ENCODE measurements at regions of chr19 and their contacts with region 1.

Region 1: GRCh38 chr19:7943444-7944176 is at the start of gene TIMM44:
- DNase-seq: peak; percentile 91 to 99 (median 98)
- ATAC-seq: peak; percentile 98
- H3K4me3 ChIP-seq: peak within 1 kb of the TSS; percentile 92
- H3K4me3 Mint-ChIP-seq: peak within 1 kb of the TSS; percentile 83 to 99 (median 94)
- H3K27ac ChIP-seq: peak within 1 kb of the TSS; percentile 96
- H3K27ac Mint-ChIP-seq: peak within 1 kb of the TSS; percentile 78 to 98 (median 96)
- H3K4me1 ChIP-seq: peaks cover 7 to 9% of the 10 kb centered on the region in 2 donors
- H3K4me1 Mint-ChIP-seq: peaks cover 10 to 44% (median 28%) of the 10 kb centered on the region in 7 donors
- H3K27me3 ChIP-seq: no peaks in the 10 kb centered on the region
- H3K27me3 Mint-ChIP-seq: no peaks in the 10 kb centered on the region
- total RNA-seq, gene TIMM44: 65.3 to 97.6 (median 73.8) TPM

Region 2: GRCh38 chr19:7829561-7830271 is 113.9 kb before region 1 on chr19 and contains the start of gene EVI5L:
- CTCF ChIA-PET with region 1: no interaction called
- POLR2A ChIA-PET with region 1: interaction called, 5 read pairs
- intact Hi-C with region 1: loop called in 1 of 2 experiments (anchors 1 kb)
- DNase-seq: peak; percentile 99 to 100 (median 99)
- ATAC-seq: peak; percentile 88
- H3K4me3 ChIP-seq: peak within 1 kb of the TSS; percentile 47
- H3K4me3 Mint-ChIP-seq: peak within 1 kb of the TSS; percentile 77 to 88 (median 84)
- H3K27ac ChIP-seq: peak within 1 kb of the TSS; percentile 50
- H3K27ac Mint-ChIP-seq: peak within 1 kb of the TSS; percentile 4 to 94 (median 84)
- H3K4me1 ChIP-seq: peaks cover 5 to 9% of the 10 kb centered on the region in 2 donors
- H3K4me1 Mint-ChIP-seq: peaks cover 5 to 25% (median 23%) of the 10 kb centered on the region in 7 donors
- H3K27me3 ChIP-seq: no peaks in the 10 kb centered on the region
- H3K27me3 Mint-ChIP-seq: peaks cover 0 to 11% (median 0%) of the 10 kb centered on the region in 5 donors
- total RNA-seq, gene EVI5L: 7.4 to 12.2 (median 11.4) TPM

Region 3: GRCh38 chr19:7903244-7904073 is 40.2 kb before region 1 on chr19 and contains the start of gene MAP2K7:
- CTCF ChIA-PET with region 1: no interaction called
- POLR2A ChIA-PET with region 1: interaction called, 5 read pairs
- intact Hi-C with region 1: loop called (anchors 1 kb)
- DNase-seq: peak; percentile 99 to 100 (median 100)
- ATAC-seq: peak; percentile 91
- H3K4me3 ChIP-seq: peak within 1 kb of the TSS; percentile 91
- H3K4me3 Mint-ChIP-seq: peak within 1 kb of the TSS; percentile 87 to 95 (median 92)
- H3K27ac ChIP-seq: peak within 1 kb of the TSS; percentile 77
- H3K27ac Mint-ChIP-seq: peak within 1 kb of the TSS; percentile 91 to 98 (median 96)
- H3K4me1 ChIP-seq: peaks cover 20 to 24% of the 10 kb centered on the region in 2 donors
- H3K4me1 Mint-ChIP-seq: peaks cover 12 to 37% (median 30%) of the 10 kb centered on the region in 7 donors
- H3K27me3 ChIP-seq: no peaks in the 10 kb centered on the region
- H3K27me3 Mint-ChIP-seq: peaks cover 0 to 3% (median 0%) of the 10 kb centered on the region in 5 donors
- total RNA-seq, gene MAP2K7: 48.7 to 109 (median 66.5) TPM

Region 4: GRCh38 chr19:8005534-8006256 is 62.1 kb after region 1 on chr19 and contains the start of gene ELAVL1:
- CTCF ChIA-PET with region 1: interaction called, 22 read pairs
- POLR2A ChIA-PET with region 1: interaction called, 8 read pairs
- intact Hi-C with region 1: loop called (anchors 1 kb)
- DNase-seq: peak; percentile 80 to 96 (median 88)
- ATAC-seq: peak; percentile 96
- H3K4me3 ChIP-seq: peak within 1 kb of the TSS; percentile 86
- H3K4me3 Mint-ChIP-seq: peak within 1 kb of the TSS; percentile 88 to 97 (median 92)
- H3K27ac ChIP-seq: peak within 1 kb of the TSS; percentile 93
- H3K27ac Mint-ChIP-seq: peak within 1 kb of the TSS; percentile 78 to 94 (median 90)
- H3K4me1 ChIP-seq: peaks cover 20 to 25% of the 10 kb centered on the region in 2 donors
- H3K4me1 Mint-ChIP-seq: peaks cover 30 to 43% (median 37%) of the 10 kb centered on the region in 7 donors
- H3K27me3 ChIP-seq: no peaks in the 10 kb centered on the region
- H3K27me3 Mint-ChIP-seq: no peaks in the 10 kb centered on the region
- total RNA-seq, gene ELAVL1: 32.4 to 117 (median 49.6) TPM

Region 5: GRCh38 chr19:8252922-8253589 is 309.4 kb after region 1 on chr19:
- CTCF ChIA-PET with region 1: interaction called, 10 read pairs
- POLR2A ChIA-PET with region 1: no interaction called
- intact Hi-C with region 1: loop called (anchors 1 kb)
- DNase-seq: peak; percentile 67 to 87 (median 80)
- ATAC-seq: peak; percentile 95
- H3K4me3 ChIP-seq: no peak overlapping the region
- H3K4me3 Mint-ChIP-seq: no peak overlapping the region
- H3K27ac ChIP-seq: no peak overlapping the region
- H3K27ac Mint-ChIP-seq: peak overlapping the region in 2 of 9 donors; percentile 73 to 84
- H3K4me1 ChIP-seq: no peaks in the 10 kb centered on the region
- H3K4me1 Mint-ChIP-seq: peaks cover 0 to 11% (median 6%) of the 10 kb centered on the region in 7 donors
- H3K27me3 ChIP-seq: no peaks in the 10 kb centered on the region
- H3K27me3 Mint-ChIP-seq: no peaks in the 10 kb centered on the region

Region 6: DNA sequence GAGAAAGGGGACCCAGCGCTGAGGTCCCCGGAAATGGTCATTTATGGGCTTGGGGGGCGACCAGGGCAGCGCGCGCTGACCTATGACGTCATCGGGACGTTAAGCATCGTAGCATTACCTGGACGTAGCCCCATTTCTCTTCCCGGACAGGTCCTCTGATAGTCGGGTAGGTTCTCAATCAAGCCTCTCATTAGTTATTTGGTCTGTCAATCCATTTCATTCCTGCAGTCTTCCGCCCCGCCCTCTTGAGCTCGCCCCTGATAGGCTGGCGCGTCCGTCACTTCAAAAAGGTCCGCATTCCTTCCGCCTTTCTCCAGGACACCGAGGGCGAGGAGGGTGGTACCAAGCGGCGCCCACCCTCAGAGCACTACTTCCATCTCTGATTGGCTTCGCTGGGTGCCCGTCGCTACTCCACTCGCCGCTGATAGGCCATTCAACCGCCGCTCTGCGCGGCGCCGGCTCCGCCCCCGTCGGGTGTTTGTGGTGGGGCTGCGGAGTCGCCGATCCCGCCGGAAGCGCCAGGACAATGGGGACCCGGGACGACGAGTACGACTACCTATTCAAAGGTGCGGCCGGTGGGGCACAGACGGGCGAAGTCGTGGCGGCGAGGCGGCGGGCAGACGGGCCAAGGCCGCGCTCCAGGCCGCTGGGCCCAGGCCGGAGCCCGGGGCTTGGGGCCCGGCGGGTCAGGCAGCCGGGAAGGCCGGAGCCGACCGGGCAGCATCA is 446.4 kb after region 1 on chr19 and contains the start of gene RAB11B:
- CTCF ChIA-PET with region 1: no interaction called
- POLR2A ChIA-PET with region 1: no interaction called
- intact Hi-C with region 1: loop called in 1 of 2 experiments (anchors 1 kb)
- DNase-seq: peak; percentile 81 to 99 (median 98)
- ATAC-seq: peak; percentile 93
- H3K4me3 ChIP-seq: peak within 1 kb of the TSS; percentile 87
- H3K4me3 Mint-ChIP-seq: peak within 1 kb of the TSS; percentile 87 to 98 (median 92)
- H3K27ac ChIP-seq: peak within 1 kb of the TSS; percentile 98
- H3K27ac Mint-ChIP-seq: peak within 1 kb of the TSS; percentile 82 to 98 (median 93)
- H3K4me1 ChIP-seq: peaks cover 4 to 8% of the 10 kb centered on the region in 2 donors
- H3K4me1 Mint-ChIP-seq: peaks cover 18 to 36% (median 28%) of the 10 kb centered on the region in 7 donors
- H3K27me3 ChIP-seq: no peaks in the 10 kb centered on the region
- H3K27me3 Mint-ChIP-seq: no peaks in the 10 kb centered on the region
- total RNA-seq, gene RAB11B: 77.4 to 113 (median 103) TPM

Measured in naive thymus-derived CD4-positive, alpha-beta T cell (primary cell).